ENCODE measurements at regions of chr12 and their contacts with region 1.

Region 1: DNA sequence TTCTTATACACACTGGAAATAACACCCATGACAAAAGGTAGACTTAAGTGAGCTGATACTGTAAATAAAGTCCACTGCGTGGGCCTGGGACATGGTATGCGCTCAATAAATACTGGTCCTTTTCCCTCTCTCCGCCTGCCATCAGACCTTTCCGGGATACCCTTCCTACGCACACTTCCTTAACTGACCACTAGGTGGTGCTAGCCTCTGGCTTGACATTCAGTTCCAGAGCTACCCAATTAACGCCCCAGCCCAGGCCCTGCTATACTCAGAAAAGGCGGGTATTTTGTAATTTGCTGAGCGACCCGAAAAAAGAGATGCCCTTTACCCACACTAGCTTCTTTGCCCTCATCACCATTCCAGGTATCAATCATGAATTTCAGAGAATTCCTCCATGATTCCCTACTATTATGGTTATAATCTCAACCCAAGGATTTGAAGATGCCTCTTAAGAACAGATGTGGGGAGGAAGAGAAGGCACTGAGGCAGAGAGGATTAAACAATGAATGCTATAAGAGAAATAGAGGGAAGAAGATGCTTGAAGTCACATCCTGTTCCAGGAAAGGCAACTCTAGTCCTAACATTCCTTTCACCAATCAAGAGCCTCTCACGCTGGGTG is 3.9 kb upstream of the LRP1 start:
- DNase-seq: peak; percentile 31
- ATAC-seq: peak; percentile 72
- H3K4me3 Mint-ChIP-seq: no peak overlapping the region
- H3K27ac Mint-ChIP-seq: no peak overlapping the region
- H3K4me1 Mint-ChIP-seq: peaks cover 5% of the 10 kb centered on the region
- H3K27me3 Mint-ChIP-seq: no peaks in the 10 kb centered on the region
- CTCF ChIP-seq: no peak

Region 2: DNA sequence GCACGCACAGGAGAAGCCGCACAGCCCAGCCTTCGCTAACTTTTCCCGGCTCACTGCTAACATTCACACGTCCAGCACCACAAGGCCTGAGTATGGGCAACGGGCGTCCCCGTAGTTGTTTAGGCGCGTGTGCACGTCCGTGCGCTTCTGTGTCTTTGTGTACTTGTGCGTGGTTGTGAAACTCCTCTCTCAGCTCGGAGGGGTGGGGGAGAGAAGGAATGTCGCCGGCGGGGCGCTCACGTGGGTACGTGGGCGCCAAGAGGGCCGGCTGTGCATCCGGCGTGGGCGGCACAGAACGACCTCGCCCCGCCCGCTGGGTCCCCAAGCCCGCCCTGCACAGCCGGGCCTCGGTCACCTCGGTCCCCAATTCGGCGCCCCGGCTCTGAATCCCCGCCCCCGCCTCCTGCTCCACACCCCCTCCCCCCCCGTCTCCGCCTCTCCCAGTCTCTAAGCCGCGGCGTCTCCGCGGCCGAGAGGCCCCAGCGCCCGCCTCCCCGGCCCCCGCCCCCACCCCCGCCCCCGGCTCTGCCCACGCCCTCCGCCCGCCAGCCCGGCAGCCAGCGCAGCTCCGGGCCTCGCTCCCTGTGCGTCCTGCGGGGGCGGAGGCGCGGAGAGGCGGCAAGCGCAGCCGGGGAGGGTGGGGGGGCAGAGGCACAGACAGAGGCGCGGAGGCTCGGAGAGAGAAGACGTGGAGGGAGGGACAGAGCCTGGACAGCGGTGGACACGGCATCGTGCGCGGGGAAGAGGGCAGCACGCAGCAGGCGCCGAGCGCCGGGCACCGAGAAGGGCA is 35.7 kb before region 1 on chr12 and contains the start of gene NAB2:
- CTCF ChIA-PET with region 1: interaction called, 3 read pairs
- POLR2A ChIA-PET with region 1: interaction called, 10 read pairs
- intact Hi-C with region 1: no loop called
- DNase-seq: peak; percentile 89
- ATAC-seq: peak; percentile 66
- H3K4me3 Mint-ChIP-seq: peak within 1 kb of the TSS; percentile 91
- H3K27ac Mint-ChIP-seq: peak within 1 kb of the TSS; percentile 96
- H3K4me1 Mint-ChIP-seq: peaks cover 55% of the 10 kb centered on the region
- H3K27me3 Mint-ChIP-seq: no peaks in the 10 kb centered on the region
- CTCF ChIP-seq: no peak
- total RNA-seq, gene NAB2: 20.4 and 22.1 TPM in 2 replicates

Region 3: DNA sequence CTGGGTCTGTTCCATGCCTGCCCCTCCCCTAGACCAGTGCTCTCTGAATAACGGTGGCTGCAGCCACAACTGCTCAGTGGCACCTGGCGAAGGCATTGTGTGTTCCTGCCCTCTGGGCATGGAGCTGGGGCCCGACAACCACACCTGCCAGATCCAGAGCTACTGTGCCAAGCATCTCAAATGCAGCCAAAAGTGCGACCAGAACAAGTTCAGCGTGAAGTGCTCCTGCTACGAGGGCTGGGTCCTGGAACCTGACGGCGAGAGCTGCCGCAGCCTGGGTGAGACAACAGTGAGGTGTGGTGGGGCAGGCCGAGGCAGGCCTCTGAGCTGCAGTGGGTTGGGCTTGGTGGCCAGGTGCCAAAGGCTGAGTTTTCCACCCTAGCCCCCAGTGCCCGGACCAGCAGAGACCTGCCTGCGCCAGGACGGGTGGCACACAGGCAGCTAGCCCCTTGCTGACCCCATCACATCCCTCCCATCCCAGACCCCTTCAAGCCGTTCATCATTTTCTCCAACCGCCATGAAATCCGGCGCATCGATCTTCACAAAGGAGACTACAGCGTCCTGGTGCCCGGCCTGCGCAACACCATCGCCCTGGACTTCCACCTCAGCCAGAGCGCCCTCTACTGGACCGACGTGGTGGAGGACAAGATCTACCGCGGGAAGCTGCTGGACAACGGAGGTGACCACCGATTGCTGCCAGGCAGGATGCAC is 51.2 kb after region 1 on chr12:
- CTCF ChIA-PET with region 1: interaction called, 20 read pairs
- POLR2A ChIA-PET with region 1: interaction called, 6 read pairs
- intact Hi-C with region 1: loop called (anchors 1 kb)
- DNase-seq: no peak
- ATAC-seq: no peak
- H3K4me3 Mint-ChIP-seq: no peak overlapping the region
- H3K27ac Mint-ChIP-seq: no peak overlapping the region
- H3K4me1 Mint-ChIP-seq: no peaks in the 10 kb centered on the region
- H3K27me3 Mint-ChIP-seq: peaks cover 2% of the 10 kb centered on the region
- CTCF ChIP-seq: no peak

Region 4: GRCh38 chr12:57182921-57183790 is 58.8 kb after region 1 on chr12:
- CTCF ChIA-PET with region 1: interaction called, 20 read pairs
- POLR2A ChIA-PET with region 1: interaction called, 6 read pairs
- intact Hi-C with region 1: loop called (anchors 1 kb)
- DNase-seq: peak; percentile 74
- ATAC-seq: peak; percentile 100
- H3K4me3 Mint-ChIP-seq: no peak overlapping the region
- H3K27ac Mint-ChIP-seq: peak overlapping the region; percentile 6
- H3K4me1 Mint-ChIP-seq: peaks cover 4% of the 10 kb centered on the region
- H3K27me3 Mint-ChIP-seq: peaks cover 1% of the 10 kb centered on the region
- CTCF ChIP-seq: no peak

Region 5: GRCh38 chr12:57195611-57196371 is 71.4 kb after region 1 on chr12:
- CTCF ChIA-PET with region 1: no interaction called
- POLR2A ChIA-PET with region 1: no interaction called
- intact Hi-C with region 1: no loop called
- DNase-seq: no peak
- ATAC-seq: no peak
- H3K4me3 Mint-ChIP-seq: no peak overlapping the region
- H3K27ac Mint-ChIP-seq: no peak overlapping the region
- H3K4me1 Mint-ChIP-seq: no peaks in the 10 kb centered on the region
- H3K27me3 Mint-ChIP-seq: no peaks in the 10 kb centered on the region
- CTCF ChIP-seq: no peak

Region 6: GRCh38 chr12:57238854-57239554 is 114.6 kb after region 1 on chr12:
- CTCF ChIA-PET with region 1: interaction called, 17 read pairs
- POLR2A ChIA-PET with region 1: interaction called, 8 read pairs
- intact Hi-C with region 1: loop called (anchors 1 kb)
- DNase-seq: peak; percentile 96
- ATAC-seq: peak; percentile 54
- H3K4me3 Mint-ChIP-seq: peak overlapping the region; percentile 89
- H3K27ac Mint-ChIP-seq: peak overlapping the region; percentile 90
- H3K4me1 Mint-ChIP-seq: peaks cover 94% of the 10 kb centered on the region
- H3K27me3 Mint-ChIP-seq: peaks cover 8% of the 10 kb centered on the region
- CTCF ChIP-seq: peak; percentile 99

Region 7: GRCh38 chr12:57261428-57261865 is 137.1 kb after region 1 on chr12:
- CTCF ChIA-PET with region 1: no interaction called
- POLR2A ChIA-PET with region 1: no interaction called
- intact Hi-C with region 1: no loop called
- DNase-seq: no peak
- ATAC-seq: no peak
- H3K4me3 Mint-ChIP-seq: no peak overlapping the region
- H3K27ac Mint-ChIP-seq: no peak overlapping the region
- H3K4me1 Mint-ChIP-seq: peaks cover 5% of the 10 kb centered on the region
- H3K27me3 Mint-ChIP-seq: no peaks in the 10 kb centered on the region
- CTCF ChIP-seq: no peak